Heart right ventricle (tissue), 16 donors: ENCODE measurements at regions of chr14 and their contacts with region 1.

Region 1: GRCh38 chr14:55129428-55130195 is 560 bp downstream of the LGALS3 start:
- DNase-seq: peak; percentile 73 to 76
- ATAC-seq: peak; percentile 66 to 82 (median 75)
- H3K4me3 ChIP-seq: peak overlapping the region; percentile 67 to 96 (median 87)
- H3K27ac ChIP-seq: peak overlapping the region; percentile 93 to 99 (median 97)
- H3K4me1 ChIP-seq: peaks cover 0 to 84% (median 52%) of the 10 kb centered on the region in 9 donors
- H3K27me3 ChIP-seq: no peaks in the 10 kb centered on the region
- CTCF ChIP-seq: no peak

Region 2: DNA sequence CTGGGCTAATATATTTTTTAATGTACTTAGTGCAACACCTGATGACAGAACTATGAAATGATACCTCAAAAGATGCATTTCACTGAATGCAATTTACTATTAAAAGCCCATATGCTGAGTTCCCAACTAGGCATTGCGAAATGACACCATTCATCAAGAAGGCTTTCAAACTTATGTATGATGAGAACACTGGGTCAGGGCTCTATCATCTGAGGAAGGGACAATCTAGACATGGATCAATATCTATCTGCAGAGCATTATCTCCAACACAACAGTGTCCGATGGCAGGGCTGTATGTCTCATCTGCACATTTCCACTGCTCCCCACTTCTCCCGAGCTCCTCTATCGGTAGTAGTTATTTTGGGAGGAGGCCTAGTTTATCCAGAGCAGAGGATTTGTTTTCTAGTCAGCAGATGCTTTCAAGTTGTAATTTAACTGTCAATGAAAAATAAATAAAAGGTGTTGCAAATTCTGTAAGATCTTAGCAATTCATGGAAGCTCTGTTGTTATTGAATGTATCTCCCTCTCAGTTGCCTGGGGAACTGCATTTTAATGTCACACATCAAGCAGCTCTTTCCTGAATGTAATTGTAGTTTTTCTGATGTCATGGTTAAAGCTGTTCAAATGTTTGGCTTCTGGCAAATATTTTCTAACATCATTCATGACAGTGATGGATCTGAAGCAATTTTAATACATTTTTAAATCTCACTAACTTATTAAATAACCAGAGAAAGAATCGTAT is 219.6 kb before region 1 on chr14:
- intact Hi-C with region 1: no loop called
- DNase-seq: no peak
- ATAC-seq: no peak
- H3K4me3 ChIP-seq: no peak overlapping the region
- H3K27ac ChIP-seq: no peak overlapping the region
- H3K4me1 ChIP-seq: peaks cover 0 to 10% (median 0%) of the 10 kb centered on the region in 9 donors
- H3K27me3 ChIP-seq: no peaks in the 10 kb centered on the region
- CTCF ChIP-seq: no peak

Region 3: GRCh38 chr14:54922598-54922997 is 207.0 kb before region 1 on chr14:
- intact Hi-C with region 1: no loop called
- DNase-seq: no peak
- ATAC-seq: no peak
- H3K4me3 ChIP-seq: no peak overlapping the region
- H3K27ac ChIP-seq: no peak overlapping the region
- H3K4me1 ChIP-seq: peaks cover 0 to 4% (median 0%) of the 10 kb centered on the region in 9 donors
- H3K27me3 ChIP-seq: peaks cover 0 to 12% (median 0%) of the 10 kb centered on the region in 7 donors
- CTCF ChIP-seq: no peak

Region 4: DNA sequence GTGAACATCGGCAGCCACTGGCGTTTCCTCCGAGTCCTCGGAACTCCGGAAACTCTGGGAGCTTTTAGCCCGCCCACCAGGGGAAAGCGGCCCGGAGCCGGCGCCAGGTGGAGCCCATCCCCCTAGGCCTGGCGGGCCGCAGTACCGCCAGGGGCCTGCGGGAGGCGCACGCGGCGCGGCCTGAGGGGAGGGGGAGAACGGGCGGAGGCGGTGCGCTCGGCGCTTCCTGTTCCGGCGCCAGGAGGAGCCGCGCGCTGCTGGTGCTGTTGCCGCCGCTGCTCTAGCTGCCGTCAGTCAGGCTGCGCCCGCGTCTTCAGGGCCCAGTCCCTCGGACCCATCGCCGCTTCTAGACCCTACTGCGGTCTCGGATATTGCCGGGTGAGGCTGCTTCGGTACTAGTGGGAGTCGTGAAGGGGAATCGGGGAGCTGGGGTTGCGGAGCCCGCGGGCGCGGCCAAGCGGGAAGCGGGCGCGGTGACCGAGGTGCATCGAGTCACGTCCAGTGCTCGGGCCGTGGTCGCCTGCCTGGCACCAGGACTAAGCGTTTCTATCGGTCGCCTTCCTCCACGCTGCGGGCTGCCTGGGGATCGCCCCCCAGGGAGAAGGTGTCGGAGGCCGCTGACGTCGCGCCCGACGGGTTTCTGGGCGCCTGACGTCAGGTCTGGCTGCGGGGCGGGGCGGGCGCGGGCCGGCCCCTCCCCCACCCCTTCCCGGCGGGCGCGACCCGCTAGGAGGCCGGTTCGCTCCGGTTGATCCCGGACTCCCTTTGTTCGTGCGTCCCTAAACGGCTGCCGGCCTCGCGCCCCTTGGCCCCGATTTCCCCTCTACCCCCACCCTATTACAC is 78.0 kb before region 1 on chr14 and contains the start of gene MAPK1IP1L:
- intact Hi-C with region 1: loop called in 1 of 10 experiments (anchors 5 kb)
- DNase-seq: peak; percentile 92 to 94
- ATAC-seq: peak; percentile 96 to 99 (median 98)
- H3K4me3 ChIP-seq: peak within 1 kb of the TSS; percentile 83 to 100 (median 94)
- H3K27ac ChIP-seq: peak within 1 kb of the TSS; percentile 99 to 100 (median 100)
- H3K4me1 ChIP-seq: peaks cover 0 to 47% (median 41%) of the 10 kb centered on the region in 9 donors
- H3K27me3 ChIP-seq: no peaks in the 10 kb centered on the region
- CTCF ChIP-seq: peak; percentile 99 to 100 (median 100)
- total RNA-seq, gene MAPK1IP1L: 58.6 to 105 (median 78.4) TPM

Region 5: GRCh38 chr14:55062517-55063351 is 66.9 kb before region 1 on chr14:
- intact Hi-C with region 1: no loop called
- DNase-seq: peak; percentile 27 to 57
- ATAC-seq: peak; percentile 49 to 88 (median 82)
- H3K4me3 ChIP-seq: no peak overlapping the region
- H3K27ac ChIP-seq: peak overlapping the region in 4 of 10 donors; percentile 3 to 30 (median 24)
- H3K4me1 ChIP-seq: peaks cover 4 to 71% (median 31%) of the 10 kb centered on the region in 9 donors
- H3K27me3 ChIP-seq: no peaks in the 10 kb centered on the region
- CTCF ChIP-seq: no peak

Region 6: GRCh38 chr14:55085060-55085660 is 44.5 kb before region 1 on chr14:
- intact Hi-C with region 1: loop called in 6 of 10 experiments (anchors 2 to 5 kb)
- DNase-seq: no peak
- ATAC-seq: no peak
- H3K4me3 ChIP-seq: no peak overlapping the region
- H3K27ac ChIP-seq: no peak overlapping the region
- H3K4me1 ChIP-seq: peaks cover 0 to 13% (median 3%) of the 10 kb centered on the region in 9 donors
- H3K27me3 ChIP-seq: no peaks in the 10 kb centered on the region
- CTCF ChIP-seq: no peak

Region 7: DNA sequence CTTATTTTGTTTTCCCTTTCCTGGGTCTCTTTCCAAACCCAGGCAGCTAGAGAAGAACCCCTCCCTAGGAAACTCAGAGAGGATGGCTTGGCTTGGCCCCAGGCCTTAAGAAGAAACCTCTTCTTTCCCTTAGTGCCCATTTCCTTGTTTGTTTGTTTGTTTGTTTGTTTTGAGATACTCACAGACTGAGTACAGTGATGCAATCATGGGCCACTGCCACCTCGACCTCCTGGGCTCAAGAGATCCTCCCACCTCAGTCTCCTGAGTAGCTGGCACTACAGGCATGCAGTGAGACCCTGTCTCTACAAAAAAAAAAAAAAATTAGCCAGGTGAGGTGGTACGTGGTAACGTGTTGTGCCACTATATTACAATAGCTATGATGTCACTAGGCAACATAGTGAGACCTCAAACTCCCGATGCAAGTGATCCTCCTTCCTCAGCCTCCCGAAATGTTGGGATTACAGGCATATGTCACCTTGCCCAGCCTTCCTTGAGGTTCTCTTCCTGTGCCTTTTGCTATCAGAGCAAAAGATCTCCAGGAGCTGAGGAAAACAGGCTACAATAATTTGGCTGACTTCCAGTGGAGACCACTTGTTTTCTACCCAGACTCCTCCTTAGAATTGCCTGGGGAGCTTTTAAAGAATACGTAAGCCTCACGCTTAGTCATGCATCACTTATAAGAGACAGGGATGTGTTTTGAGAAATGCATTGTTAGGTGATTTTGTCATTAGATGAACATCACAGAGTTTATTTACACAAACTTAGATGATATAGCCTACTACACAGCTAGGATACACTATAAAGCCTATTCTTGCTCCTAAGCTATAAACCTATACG is 35.1 kb before region 1 on chr14:
- intact Hi-C with region 1: loop called in 6 of 10 experiments (anchors 2 to 5 kb)
- DNase-seq: no peak
- ATAC-seq: no peak
- H3K4me3 ChIP-seq: no peak overlapping the region
- H3K27ac ChIP-seq: no peak overlapping the region
- H3K4me1 ChIP-seq: peaks cover 0 to 43% (median 23%) of the 10 kb centered on the region in 9 donors
- H3K27me3 ChIP-seq: no peaks in the 10 kb centered on the region
- CTCF ChIP-seq: no peak

Region 8: DNA sequence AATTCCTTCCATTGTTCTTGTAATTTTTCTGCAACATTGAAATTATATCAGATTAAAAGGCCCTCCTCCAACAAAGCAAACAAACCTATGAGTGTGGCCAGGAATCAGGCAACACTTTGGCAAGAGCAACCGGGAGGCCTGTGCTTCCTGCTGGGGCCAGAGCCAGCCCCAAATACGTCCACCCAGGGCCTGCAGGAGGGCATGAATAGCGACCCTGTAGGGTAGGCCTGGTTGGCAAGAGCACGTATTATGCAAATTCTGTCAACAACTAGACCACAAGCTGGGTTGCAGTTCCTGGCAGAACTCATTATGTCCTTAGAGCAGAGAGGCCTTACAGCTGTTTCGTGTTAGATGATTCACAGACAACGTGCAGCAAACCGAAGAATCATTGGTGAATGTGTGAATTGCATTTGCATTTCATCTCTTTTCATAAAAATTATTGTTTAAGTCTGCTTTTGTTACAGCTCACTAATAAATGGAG is 27.4 kb before region 1 on chr14:
- intact Hi-C with region 1: loop called in 2 of 10 experiments (anchors 2 kb)
- DNase-seq: peak; percentile 75 to 77
- ATAC-seq: peak; percentile 75 to 93 (median 87)
- H3K4me3 ChIP-seq: no peak overlapping the region
- H3K27ac ChIP-seq: peak overlapping the region; percentile 76 to 96 (median 87)
- H3K4me1 ChIP-seq: peaks cover 10 to 98% (median 85%) of the 10 kb centered on the region in 9 donors
- H3K27me3 ChIP-seq: no peaks in the 10 kb centered on the region
- CTCF ChIP-seq: no peak

Region 9: DNA sequence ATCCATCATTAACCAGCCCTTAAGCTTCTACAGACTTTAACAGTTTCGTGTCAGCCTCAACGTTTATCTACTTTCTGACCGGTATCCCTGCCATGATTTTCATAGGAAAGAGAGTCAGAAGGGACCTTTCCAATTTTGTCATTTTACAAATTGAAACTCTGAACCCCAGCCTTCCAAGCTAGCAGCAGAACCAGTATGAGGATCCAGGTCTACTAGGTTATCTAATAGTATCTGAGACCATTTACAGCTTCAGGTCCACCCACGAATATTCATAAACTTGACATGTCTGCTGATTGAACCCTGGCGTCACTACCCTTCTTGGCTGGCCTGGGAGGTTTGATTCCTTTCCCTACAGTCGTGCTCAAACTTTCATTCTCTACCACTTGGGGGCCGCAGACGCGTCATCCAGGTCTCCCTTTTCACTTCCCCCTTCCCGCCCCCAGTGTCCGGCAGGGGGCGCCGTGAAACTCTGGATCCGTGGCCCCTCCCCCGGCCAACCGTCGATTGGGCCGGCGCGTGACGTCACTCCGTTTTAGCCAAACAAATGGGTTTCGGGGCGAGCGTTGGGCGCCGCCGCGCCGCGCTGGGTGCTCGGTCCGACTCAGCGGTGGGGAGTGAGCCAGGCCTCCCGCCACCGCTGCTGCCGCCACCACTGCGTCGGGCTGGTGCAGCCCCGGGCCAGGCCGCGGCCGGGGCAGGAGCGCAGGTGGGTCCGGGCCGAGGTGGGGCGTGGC is 141.4 kb after region 1 on chr14 and contains the start of gene FBXO34:
- intact Hi-C with region 1: no loop called
- DNase-seq: peak; percentile 99 to 100
- ATAC-seq: peak; percentile 90 to 97 (median 94)
- H3K4me3 ChIP-seq: peak within 1 kb of the TSS; percentile 73 to 99 (median 96)
- H3K27ac ChIP-seq: peak within 1 kb of the TSS; percentile 76 to 97 (median 96)
- H3K4me1 ChIP-seq: peaks cover 0 to 39% (median 29%) of the 10 kb centered on the region in 9 donors
- H3K27me3 ChIP-seq: no peaks in the 10 kb centered on the region
- CTCF ChIP-seq: peak; percentile 99 to 100 (median 100)
- total RNA-seq, gene FBXO34: 16.9 to 26.2 (median 21.2) TPM